CD4-positive, alpha-beta T cell (primary cell): ENCODE measurements at regions of chr13 and their contacts with region 1.

Region 1: DNA sequence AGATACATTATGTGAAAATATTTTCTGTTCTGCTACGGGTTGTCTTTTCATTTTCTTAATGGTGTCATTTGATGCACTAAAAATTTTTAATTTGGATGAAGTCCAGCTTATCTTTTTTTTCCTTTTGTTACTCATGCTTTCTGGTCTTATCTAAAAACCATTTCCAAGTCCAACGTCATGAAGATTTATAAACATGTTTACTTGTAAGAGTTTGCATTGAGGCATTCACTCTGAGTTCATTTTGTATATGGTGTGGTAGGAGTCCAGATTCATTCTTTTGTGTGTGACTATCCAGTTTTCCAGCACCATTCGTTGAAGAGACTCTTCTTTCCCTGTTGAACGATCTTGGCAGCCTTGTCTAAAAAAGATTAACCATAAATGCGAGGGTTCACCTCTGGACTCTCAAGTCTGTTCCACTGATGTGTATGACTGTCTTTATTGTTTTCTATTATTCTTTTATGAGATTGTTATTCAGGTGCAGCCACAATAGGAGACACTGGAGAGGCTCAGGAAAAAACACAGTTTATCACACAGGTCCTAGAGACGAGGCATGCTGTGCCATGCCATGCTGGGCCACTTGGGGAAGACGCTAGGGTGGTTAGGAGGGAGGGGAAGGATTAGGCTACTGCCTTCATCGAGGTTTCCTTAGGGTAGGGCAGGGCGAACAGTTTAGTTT is 35.0 kb downstream of the NAA16 start:
- DNase-seq: no peak
- ATAC-seq: no peak
- H3K4me3 ChIP-seq: no peak overlapping the region
- H3K4me3 Mint-ChIP-seq: peak overlapping the region; percentile 31
- H3K27ac ChIP-seq: peak overlapping the region in 1 of 2 donors; percentile 5
- H3K27ac Mint-ChIP-seq: peak overlapping the region; percentile 82
- H3K4me1 ChIP-seq: peaks cover 15% of the 10 kb centered on the region
- H3K4me1 Mint-ChIP-seq: peaks cover 56% of the 10 kb centered on the region
- H3K27me3 ChIP-seq: no peaks in the 10 kb centered on the region
- H3K27me3 Mint-ChIP-seq: no peaks in the 10 kb centered on the region
- CTCF ChIP-seq: no peak

Region 2: GRCh38 chr13:41075034-41075433 is 271.0 kb before region 1 on chr13:
- CTCF ChIA-PET with region 1: no interaction called
- POLR2A ChIA-PET with region 1: no interaction called
- intact Hi-C with region 1: loop called in 1 of 2 experiments (anchors 10 kb)
- DNase-seq: peak in 13 of 14 experiments; percentile 3 to 75 (median 20)
- ATAC-seq: peak; percentile 49
- H3K4me3 ChIP-seq: no peak overlapping the region
- H3K4me3 Mint-ChIP-seq: no peak overlapping the region
- H3K27ac ChIP-seq: no peak overlapping the region
- H3K27ac Mint-ChIP-seq: no peak overlapping the region
- H3K4me1 ChIP-seq: no peaks in the 10 kb centered on the region
- H3K4me1 Mint-ChIP-seq: no peaks in the 10 kb centered on the region
- H3K27me3 ChIP-seq: no peaks in the 10 kb centered on the region
- H3K27me3 Mint-ChIP-seq: no peaks in the 10 kb centered on the region
- CTCF ChIP-seq: peak; percentile 53

Region 3: DNA sequence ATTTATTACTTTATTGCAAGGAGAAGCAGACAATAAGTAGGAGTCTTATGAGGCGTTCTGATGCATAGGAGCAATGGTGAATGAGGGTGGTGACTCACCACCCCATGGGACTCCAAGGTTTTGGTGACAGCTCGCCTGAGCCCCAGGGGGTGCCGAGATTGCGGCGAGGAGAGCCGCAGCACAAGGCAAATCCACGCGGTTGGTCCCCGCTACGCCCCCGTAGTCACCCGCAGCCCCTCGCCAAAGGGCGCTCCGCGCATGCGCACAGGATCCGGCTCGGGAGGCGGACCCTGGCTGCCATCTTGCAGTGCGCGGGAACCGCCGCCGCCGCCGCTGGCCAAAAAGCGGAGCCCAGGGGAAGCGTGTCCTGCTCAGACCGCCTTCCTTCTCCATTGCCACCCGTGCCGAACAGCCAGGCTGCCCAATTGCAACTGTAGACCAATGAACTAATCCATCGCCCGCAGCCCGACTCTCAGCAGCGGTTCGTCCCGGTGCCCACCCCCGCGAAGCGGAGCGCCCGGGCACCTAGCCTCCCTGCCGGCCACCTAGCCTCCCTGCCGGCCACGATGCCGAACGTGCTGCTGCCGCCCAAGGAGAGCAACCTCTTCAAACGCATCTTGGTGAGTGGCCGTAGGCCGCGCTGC is 35.0 kb before region 1 on chr13 and contains the start of gene NAA16:
- CTCF ChIA-PET with region 1: no interaction called
- POLR2A ChIA-PET with region 1: no interaction called
- intact Hi-C with region 1: loop called (anchors 5 kb)
- DNase-seq: peak; percentile 89 to 97 (median 94)
- ATAC-seq: peak; percentile 85
- H3K4me3 ChIP-seq: peak within 1 kb of the TSS; percentile 90
- H3K4me3 Mint-ChIP-seq: peak within 1 kb of the TSS; percentile 97
- H3K27ac ChIP-seq: peak within 1 kb of the TSS; percentile 55 to 85
- H3K27ac Mint-ChIP-seq: peak within 1 kb of the TSS; percentile 98
- H3K4me1 ChIP-seq: peaks cover 35% of the 10 kb centered on the region
- H3K4me1 Mint-ChIP-seq: peaks cover 56% of the 10 kb centered on the region
- H3K27me3 ChIP-seq: no peaks in the 10 kb centered on the region
- H3K27me3 Mint-ChIP-seq: no peaks in the 10 kb centered on the region
- CTCF ChIP-seq: no peak
- total RNA-seq, gene NAA16: 76.9 to 80.5 TPM

Region 4: GRCh38 chr13:41384755-41385503 is 38.9 kb after region 1 on chr13:
- CTCF ChIA-PET with region 1: no interaction called
- POLR2A ChIA-PET with region 1: no interaction called
- intact Hi-C with region 1: loop called in 1 of 2 experiments (anchors 5 kb)
- DNase-seq: peak in 3 of 14 experiments; percentile 17 to 25 (median 23)
- ATAC-seq: no peak
- H3K4me3 ChIP-seq: no peak overlapping the region
- H3K4me3 Mint-ChIP-seq: no peak overlapping the region
- H3K27ac ChIP-seq: no peak overlapping the region
- H3K27ac Mint-ChIP-seq: no peak overlapping the region
- H3K4me1 ChIP-seq: peaks cover 5% of the 10 kb centered on the region
- H3K4me1 Mint-ChIP-seq: peaks cover 51% of the 10 kb centered on the region
- H3K27me3 ChIP-seq: no peaks in the 10 kb centered on the region
- H3K27me3 Mint-ChIP-seq: no peaks in the 10 kb centered on the region
- CTCF ChIP-seq: peak; percentile 45

Region 5: GRCh38 chr13:41588899-41589298 is 242.8 kb after region 1 on chr13:
- CTCF ChIA-PET with region 1: no interaction called
- POLR2A ChIA-PET with region 1: no interaction called
- intact Hi-C with region 1: no loop called
- DNase-seq: peak in 3 of 14 experiments; percentile 15 to 52 (median 39)
- ATAC-seq: no peak
- H3K4me3 ChIP-seq: no peak overlapping the region
- H3K4me3 Mint-ChIP-seq: no peak overlapping the region
- H3K27ac ChIP-seq: no peak overlapping the region
- H3K27ac Mint-ChIP-seq: no peak overlapping the region
- H3K4me1 ChIP-seq: peaks cover 3% of the 10 kb centered on the region
- H3K4me1 Mint-ChIP-seq: no peaks in the 10 kb centered on the region
- H3K27me3 ChIP-seq: no peaks in the 10 kb centered on the region
- H3K27me3 Mint-ChIP-seq: no peaks in the 10 kb centered on the region
- CTCF ChIP-seq: no peak